Endothelial cell of umbilical vein (primary cell): ENCODE measurements at regions of chr2 and their contacts with region 1.

Region 1: DNA sequence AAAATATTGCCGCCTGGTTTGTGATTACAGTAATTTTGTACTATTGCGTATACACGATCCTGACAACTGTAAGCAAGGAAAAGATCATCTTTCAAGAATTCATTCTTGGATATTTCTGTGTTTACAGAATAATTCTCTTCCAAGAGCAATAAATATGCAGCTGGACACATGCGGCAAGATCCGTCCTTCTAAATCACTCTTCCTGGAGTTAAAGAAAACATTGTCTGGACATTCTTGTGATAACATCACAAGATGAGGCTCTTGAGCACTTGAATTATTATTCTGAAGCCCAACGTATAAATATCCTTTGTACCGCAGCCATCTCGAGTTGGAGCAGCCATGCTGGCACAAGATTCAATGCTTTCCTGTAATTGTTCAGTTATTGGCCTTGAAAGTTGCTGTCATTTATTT is 9.9 kb downstream of the FHL2 start:
- DNase-seq: peak; percentile 99
- H3K4me3 ChIP-seq: no peak overlapping the region
- H3K27ac ChIP-seq: peak overlapping the region; percentile 92
- H3K4me1 ChIP-seq: peaks cover 72% of the 10 kb centered on the region
- H3K27me3 ChIP-seq: no peaks in the 10 kb centered on the region
- CTCF ChIP-seq: no peak
- POLR2A ChIP-seq: peak; percentile 72

Region 2: GRCh38 chr2:105324732-105325131 is 64.2 kb before region 1 on chr2:
- CTCF ChIA-PET with region 1: no interaction called
- POLR2A ChIA-PET with region 1: interaction called, 6 read pairs
- dilution Hi-C with region 1: no loop called
- intact Hi-C with region 1: loop called (anchors 1 kb)
- DNase-seq: peak; percentile 40
- H3K4me3 ChIP-seq: no peak overlapping the region
- H3K27ac ChIP-seq: peak overlapping the region; percentile 87
- H3K4me1 ChIP-seq: peaks cover 49% of the 10 kb centered on the region
- H3K27me3 ChIP-seq: no peaks in the 10 kb centered on the region
- CTCF ChIP-seq: no peak
- POLR2A ChIP-seq: peak; percentile 43

Region 3: DNA sequence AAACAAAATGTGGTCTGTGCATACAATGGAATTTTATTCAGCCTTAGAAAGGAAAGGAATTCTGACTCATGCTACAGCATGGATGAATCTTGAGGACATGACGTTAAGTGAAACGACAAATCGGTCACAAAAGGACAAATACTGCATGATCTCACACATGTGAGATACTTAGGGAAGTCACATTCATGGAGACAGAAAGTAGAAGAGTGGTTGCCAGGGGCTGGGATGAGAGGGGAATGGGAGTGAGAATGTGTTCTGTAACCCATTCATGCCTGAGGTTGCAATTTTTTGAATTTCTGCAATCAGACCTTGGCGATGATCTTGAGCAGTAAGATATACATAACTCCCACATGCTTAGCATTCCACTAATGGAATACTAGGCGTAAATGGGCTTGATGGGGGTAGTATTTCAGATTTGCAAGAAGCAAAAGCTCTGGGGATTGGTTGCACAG is 12.2 kb before region 1 on chr2:
- CTCF ChIA-PET with region 1: interaction called, 4 read pairs
- POLR2A ChIA-PET with region 1: interaction called, 9 read pairs
- dilution Hi-C with region 1: no loop called
- intact Hi-C with region 1: loop called (anchors 1 kb)
- DNase-seq: peak; percentile 89
- H3K4me3 ChIP-seq: no peak overlapping the region
- H3K27ac ChIP-seq: peak overlapping the region; percentile 92
- H3K4me1 ChIP-seq: peaks cover 75% of the 10 kb centered on the region
- H3K27me3 ChIP-seq: no peaks in the 10 kb centered on the region
- CTCF ChIP-seq: no peak
- POLR2A ChIP-seq: peak; percentile 33

Region 4: DNA sequence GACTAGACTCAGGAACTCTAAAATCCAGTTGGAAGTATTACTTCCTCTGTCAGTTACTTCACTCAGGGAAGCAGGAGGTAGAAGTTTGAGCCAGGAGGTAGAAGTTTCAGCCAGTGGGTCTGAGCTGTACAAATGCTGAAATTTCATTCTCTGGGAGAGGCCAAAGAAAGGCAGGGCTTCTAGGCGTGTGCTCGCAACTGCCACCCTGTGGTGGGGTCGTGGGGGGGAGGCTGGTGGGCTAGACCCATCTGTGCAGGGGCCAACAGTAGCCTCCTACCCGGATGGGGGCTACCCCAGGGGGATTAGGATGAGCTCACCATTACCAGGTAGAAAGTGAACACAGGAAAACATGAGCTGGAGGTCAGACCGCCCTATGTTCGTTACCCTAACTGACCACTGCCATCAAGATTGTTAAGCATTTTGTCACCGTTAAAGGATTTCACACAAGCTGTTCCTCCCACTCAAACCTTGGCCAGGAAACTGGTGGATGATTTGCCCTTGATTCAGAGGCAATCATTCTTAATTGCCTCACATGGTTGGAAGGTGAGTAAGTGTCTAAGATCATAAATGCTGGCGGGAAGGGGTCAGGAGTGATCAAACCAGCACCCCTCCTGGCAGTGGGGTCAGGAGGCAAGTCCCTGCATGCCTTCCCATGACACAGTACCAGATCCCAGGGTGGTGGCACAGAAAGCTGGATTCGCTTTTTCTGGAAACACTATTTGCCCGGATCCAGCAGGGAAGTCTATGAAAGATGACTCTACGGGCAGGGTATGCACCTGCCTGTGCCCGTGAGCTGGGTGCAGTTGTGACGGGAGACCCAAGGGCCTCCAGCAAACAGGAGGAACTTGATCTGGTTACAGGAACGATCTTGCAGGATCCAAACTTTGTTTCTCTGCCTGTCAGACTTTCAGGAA is 15.1 kb after region 1 on chr2:
- CTCF ChIA-PET with region 1: interaction called, 29 read pairs
- POLR2A ChIA-PET with region 1: interaction called, 16 read pairs
- dilution Hi-C with region 1: no loop called
- intact Hi-C with region 1: no loop called
- DNase-seq: peak; percentile 86
- H3K4me3 ChIP-seq: no peak overlapping the region
- H3K27ac ChIP-seq: peak overlapping the region; percentile 66
- H3K4me1 ChIP-seq: peaks cover 40% of the 10 kb centered on the region
- H3K27me3 ChIP-seq: no peaks in the 10 kb centered on the region
- CTCF ChIP-seq: peak; percentile 48 to 62
- POLR2A ChIP-seq: peak; percentile 10

Region 5: DNA sequence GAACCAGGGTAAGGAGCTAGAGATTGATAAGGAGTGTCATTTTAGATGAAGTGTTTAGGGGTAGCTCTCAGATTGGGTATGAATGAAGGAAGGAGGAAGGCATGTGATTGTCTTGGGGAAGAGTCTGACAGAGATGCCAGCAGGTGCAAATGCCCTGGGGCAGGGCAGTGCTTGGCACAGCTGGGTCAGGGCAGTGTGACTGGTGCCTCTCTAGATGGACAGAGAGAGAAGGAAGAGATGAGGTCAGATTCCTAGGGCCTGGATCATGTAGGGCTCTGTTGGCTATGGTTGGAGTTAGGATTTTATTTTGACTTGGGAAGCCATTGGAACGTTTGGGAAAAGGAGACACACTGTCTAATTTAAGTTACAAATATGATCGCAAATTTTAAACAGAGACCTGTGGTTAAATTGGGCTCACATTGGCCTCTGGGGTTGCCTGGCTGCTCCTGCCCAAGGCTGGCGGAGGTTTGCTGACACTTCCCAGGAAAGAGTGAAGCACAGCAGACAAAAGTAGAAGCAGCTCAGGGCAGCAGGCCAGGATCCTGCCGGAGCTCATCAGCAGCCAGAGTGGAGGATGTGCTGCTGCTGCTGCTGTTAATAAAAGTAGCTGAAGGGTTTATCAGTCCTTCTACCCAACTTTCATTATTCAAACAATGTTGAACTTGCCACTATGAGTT is 42.5 kb after region 1 on chr2:
- CTCF ChIA-PET with region 1: no interaction called
- POLR2A ChIA-PET with region 1: no interaction called
- dilution Hi-C with region 1: no loop called
- intact Hi-C with region 1: no loop called
- DNase-seq: no peak
- H3K4me3 ChIP-seq: no peak overlapping the region
- H3K27ac ChIP-seq: no peak overlapping the region
- H3K4me1 ChIP-seq: no peaks in the 10 kb centered on the region
- H3K27me3 ChIP-seq: peaks cover 13 to 16% of the 10 kb centered on the region in 2 experiments
- CTCF ChIP-seq: no peak
- POLR2A ChIP-seq: no peak